Psoas muscle (tissue), 8 donors: ENCODE measurements at regions of chr11 and their contacts with region 1.

Region 1: GRCh38 chr11:61193596-61193995 is 9.7 kb upstream of the PGA3 start:
- DNase-seq: no peak
- ATAC-seq: no peak
- H3K4me3 ChIP-seq: no peak overlapping the region
- H3K27ac ChIP-seq: no peak overlapping the region
- H3K4me1 ChIP-seq: no peaks in the 10 kb centered on the region
- H3K27me3 ChIP-seq: peaks cover 0 to 25% (median 0%) of the 10 kb centered on the region in 3 donors
- CTCF ChIP-seq: no peak

Region 2: GRCh38 chr11:61254403-61255025 is 60.9 kb after region 1 on chr11:
- intact Hi-C with region 1: loop called in 1 of 2 experiments (anchors 10 kb)
- DNase-seq: peak; percentile 45 to 71
- ATAC-seq: peak; percentile 56 to 73 (median 68)
- H3K4me3 ChIP-seq: no peak overlapping the region
- H3K27ac ChIP-seq: no peak overlapping the region
- H3K4me1 ChIP-seq: no peaks in the 10 kb centered on the region
- H3K27me3 ChIP-seq: no peaks in the 10 kb centered on the region
- CTCF ChIP-seq: peak; percentile 66

Region 3: DNA sequence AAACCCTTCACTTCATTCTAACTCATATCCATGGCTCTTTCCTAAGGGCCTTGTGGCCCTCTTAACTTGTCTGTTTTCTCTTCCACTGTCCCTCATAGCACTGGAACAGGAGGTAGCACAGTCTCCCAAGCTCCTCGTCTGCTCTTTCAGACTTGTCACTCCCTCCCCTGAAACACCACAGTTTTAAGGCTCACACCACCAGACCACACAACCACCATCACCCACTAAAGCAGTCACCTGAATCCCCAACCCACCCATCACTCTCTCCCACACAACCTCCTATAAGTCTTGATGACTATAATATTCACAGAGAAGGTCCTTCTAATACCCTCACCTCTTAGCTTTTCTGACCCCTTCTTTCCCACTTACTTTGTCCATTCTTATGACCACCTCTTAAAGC is 112.6 kb after region 1 on chr11:
- intact Hi-C with region 1: no loop called
- DNase-seq: no peak
- ATAC-seq: no peak
- H3K4me3 ChIP-seq: no peak overlapping the region
- H3K27ac ChIP-seq: no peak overlapping the region
- H3K4me1 ChIP-seq: no peaks in the 10 kb centered on the region
- H3K27me3 ChIP-seq: no peaks in the 10 kb centered on the region
- CTCF ChIP-seq: no peak